Ovary (tissue), 10 donors: ENCODE measurements at regions of chr7 and their contacts with region 1.

Region 1: GRCh38 chr7:16559497-16560179 is 33.0 kb downstream of the LRRC72 start:
- DNase-seq: no peak
- H3K4me3 ChIP-seq: no peak overlapping the region
- H3K27ac ChIP-seq: no peak overlapping the region
- H3K4me1 ChIP-seq: no peaks in the 10 kb centered on the region
- H3K27me3 ChIP-seq: no peaks in the 10 kb centered on the region
- CTCF ChIP-seq: no peak
- EP300 ChIP-seq: no peak
- POLR2A ChIP-seq: no peak

Region 2: GRCh38 chr7:16083931-16084330 is 475.7 kb before region 1 on chr7:
- intact Hi-C with region 1: loop called in 3 of 4 experiments (anchors 10 kb)
- DNase-seq: no peak
- H3K4me3 ChIP-seq: no peak overlapping the region
- H3K27ac ChIP-seq: no peak overlapping the region
- H3K4me1 ChIP-seq: no peaks in the 10 kb centered on the region
- H3K27me3 ChIP-seq: no peaks in the 10 kb centered on the region
- CTCF ChIP-seq: no peak
- EP300 ChIP-seq: no peak
- POLR2A ChIP-seq: no peak

Region 3: DNA sequence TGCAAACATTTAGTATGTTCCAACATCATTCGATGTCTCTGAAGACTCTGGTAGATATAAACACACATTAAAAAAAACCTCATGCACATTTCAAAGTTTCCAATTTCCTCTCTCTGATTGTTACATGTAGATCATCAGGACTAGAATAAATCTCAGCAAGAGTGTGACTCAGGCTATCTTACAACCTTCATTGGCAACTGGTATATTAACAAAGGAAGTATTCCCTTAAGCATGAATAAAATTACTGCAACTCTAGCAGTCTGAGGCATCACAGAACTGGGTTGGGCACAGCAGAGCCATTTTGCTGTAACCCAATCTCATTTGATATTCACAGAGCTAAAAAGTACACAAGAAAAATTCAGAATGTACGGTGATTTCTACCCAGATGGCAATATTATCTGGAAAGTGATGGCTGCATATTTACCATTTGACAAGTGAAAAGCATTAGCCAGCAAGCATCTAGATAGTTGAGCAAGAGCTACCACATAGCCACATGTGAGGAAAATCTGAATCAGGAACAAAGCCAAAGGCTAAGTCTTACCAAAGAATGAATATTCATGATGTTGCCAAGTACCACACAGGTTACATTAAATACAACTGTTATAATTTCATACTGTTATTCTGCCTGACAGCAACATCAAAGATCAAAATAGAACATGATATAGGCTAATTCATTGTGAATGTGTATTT is 370.5 kb before region 1 on chr7:
- intact Hi-C with region 1: no loop called
- DNase-seq: no peak
- H3K4me3 ChIP-seq: no peak overlapping the region
- H3K27ac ChIP-seq: no peak overlapping the region
- H3K4me1 ChIP-seq: no peaks in the 10 kb centered on the region
- H3K27me3 ChIP-seq: no peaks in the 10 kb centered on the region
- CTCF ChIP-seq: no peak
- EP300 ChIP-seq: no peak
- POLR2A ChIP-seq: no peak

Region 4: DNA sequence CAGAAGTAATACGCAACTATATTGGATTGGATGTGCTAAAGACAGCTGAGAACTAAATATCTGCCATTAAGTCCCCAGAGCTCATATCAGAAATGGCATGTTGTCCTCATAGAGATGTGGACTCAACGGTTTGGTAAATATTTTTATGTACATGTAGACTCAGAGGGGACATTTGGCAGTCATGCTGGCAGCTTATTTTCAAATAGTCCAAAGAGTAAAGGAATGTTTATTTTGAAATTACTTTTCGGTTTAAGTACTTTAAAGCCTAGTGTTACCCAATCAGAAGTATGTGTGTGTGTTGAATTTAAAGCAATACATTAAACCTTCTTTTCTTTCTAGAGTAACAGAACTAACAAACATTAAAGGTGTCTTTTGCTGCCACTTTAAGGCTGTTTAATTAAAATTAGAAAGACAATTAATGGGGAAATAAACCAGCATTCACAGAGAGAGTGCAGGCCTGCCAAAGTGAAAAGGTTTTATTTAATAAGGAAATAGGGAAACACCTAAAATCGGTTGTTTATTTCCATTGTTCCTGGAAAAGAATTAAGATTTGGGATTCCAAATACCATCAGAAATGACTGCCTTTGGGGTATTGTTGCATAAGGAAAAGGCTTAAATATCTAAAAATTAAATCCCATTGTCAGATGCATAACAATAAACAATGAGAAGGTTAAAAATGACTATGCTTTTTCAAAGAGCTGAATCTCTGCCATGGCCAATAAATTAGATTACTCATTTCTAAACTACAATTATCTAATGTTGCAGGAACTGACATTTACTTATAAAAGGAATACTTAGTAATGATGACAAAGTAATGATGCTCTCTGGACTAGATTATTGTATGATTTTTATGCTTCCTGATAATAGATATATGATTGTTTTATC is 625.4 kb after region 1 on chr7:
- intact Hi-C with region 1: no loop called
- DNase-seq: no peak
- H3K4me3 ChIP-seq: no peak overlapping the region
- H3K27ac ChIP-seq: no peak overlapping the region
- H3K4me1 ChIP-seq: no peaks in the 10 kb centered on the region
- H3K27me3 ChIP-seq: no peaks in the 10 kb centered on the region
- CTCF ChIP-seq: no peak
- EP300 ChIP-seq: no peak
- POLR2A ChIP-seq: no peak